ENCODE measurements at regions of chr12 and their contacts with region 1.

Region 1: DNA sequence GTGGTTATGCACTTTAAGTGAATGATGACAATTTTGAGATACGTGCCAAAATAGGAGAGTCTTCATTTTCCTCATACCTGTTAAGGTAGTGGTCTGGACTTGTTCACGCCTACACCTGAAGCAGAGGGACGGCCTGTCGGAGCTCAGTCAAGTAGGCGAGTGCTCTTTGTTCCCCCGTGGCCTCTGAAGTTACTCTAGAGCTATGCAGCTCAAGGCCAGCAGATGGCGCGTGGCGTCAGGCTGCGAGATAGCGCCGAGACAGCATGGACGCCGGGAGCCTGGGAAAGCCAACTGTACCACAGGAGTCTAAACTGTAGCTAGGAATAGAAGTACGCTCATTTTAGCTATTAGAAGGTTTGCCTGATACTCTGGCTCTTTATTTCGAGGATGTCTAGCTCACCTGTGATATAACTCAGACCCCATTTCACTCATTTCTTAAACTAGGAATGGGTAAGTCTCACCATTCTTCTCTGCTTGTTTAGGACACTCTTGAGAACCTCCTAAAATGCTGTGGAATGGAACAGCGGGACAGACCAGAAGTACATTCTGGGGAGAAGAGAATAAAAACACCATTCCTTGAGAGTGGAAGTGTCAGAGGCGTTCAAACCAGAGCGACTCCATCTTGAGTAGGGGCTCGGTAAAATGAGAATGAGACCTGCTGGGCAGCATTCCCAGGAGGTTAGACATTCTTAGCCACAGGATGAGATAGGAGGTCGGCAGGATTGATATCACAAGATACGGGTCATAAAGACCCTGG is 267.4 kb upstream of the HMGA2 start:
- DNase-seq: no peak
- H3K4me3 ChIP-seq: no peak overlapping the region
- CTCF ChIP-seq: peak; percentile 93

Region 2: DNA sequence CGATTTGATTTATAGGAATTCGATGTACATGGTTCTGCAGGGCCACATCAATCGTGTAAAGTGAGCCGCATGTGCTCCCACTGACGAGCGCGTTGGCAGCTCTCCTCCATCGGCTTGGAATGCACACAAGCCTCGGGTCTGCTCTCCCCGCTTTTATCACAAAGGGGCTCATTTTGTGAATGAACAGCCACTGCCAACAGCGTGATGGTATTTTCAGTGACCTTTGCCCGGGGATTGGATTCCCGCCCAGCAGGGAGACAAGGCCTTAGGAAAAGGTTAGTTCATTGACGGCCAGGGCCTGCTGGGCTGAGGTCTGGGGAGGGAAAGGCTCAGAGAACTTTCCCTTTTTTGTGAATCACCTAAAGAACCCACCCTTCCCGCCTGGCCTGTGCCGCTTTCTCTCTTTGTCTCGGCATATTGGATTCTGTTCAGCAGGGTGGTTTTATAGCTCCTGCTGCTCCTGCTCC is 46.2 kb before region 1 on chr12:
- CTCF ChIA-PET with region 1: no interaction called
- POLR2A ChIA-PET with region 1: no interaction called
- DNase-seq: no peak
- H3K4me3 ChIP-seq: no peak overlapping the region
- CTCF ChIP-seq: no peak

Region 3: DNA sequence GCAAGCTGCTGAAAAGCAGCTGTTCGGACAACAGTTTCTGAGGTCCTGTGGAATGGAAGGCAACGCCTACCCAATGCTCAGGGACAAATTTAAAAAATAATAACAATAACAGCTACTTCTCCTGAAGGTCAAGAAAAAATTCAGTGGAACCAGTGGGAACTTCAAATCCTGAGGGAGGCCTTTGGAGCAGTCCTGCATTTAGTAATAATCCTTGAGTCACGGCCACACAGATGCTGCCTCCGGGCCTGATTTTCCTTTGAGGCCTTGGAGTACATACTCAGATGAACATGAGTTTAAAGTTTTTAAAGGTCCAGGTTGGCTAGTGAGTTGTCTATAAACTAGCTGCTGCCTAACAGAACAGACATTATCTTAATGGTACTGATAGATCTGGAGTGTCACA is 10.3 kb before region 1 on chr12:
- CTCF ChIA-PET with region 1: interaction called, 24 read pairs
- POLR2A ChIA-PET with region 1: no interaction called
- DNase-seq: no peak
- H3K4me3 ChIP-seq: no peak overlapping the region
- CTCF ChIP-seq: no peak

Region 4: GRCh38 chr12:65649126-65649525 is 92.3 kb after region 1 on chr12:
- CTCF ChIA-PET with region 1: no interaction called
- POLR2A ChIA-PET with region 1: no interaction called
- DNase-seq: peak; percentile 98
- H3K4me3 ChIP-seq: no peak overlapping the region
- CTCF ChIP-seq: no peak